Ovary (tissue), 10 donors: ENCODE measurements at regions of chr2 and their contacts with region 1.

Region 1: GRCh38 chr2:219294356-219295351 is 14.5 kb downstream of the PTPRN start:
- DNase-seq: peak; percentile 84 to 93 (median 91)
- H3K4me3 ChIP-seq: peak overlapping the region; percentile 58
- H3K27ac ChIP-seq: peak overlapping the region; percentile 83 to 97
- H3K4me1 ChIP-seq: peaks cover 9% of the 10 kb centered on the region
- H3K27me3 ChIP-seq: no peaks in the 10 kb centered on the region
- CTCF ChIP-seq: peak; percentile 97 to 100 (median 99)
- EP300 ChIP-seq: no peak
- POLR2A ChIP-seq: peak; percentile 61

Region 2: DNA sequence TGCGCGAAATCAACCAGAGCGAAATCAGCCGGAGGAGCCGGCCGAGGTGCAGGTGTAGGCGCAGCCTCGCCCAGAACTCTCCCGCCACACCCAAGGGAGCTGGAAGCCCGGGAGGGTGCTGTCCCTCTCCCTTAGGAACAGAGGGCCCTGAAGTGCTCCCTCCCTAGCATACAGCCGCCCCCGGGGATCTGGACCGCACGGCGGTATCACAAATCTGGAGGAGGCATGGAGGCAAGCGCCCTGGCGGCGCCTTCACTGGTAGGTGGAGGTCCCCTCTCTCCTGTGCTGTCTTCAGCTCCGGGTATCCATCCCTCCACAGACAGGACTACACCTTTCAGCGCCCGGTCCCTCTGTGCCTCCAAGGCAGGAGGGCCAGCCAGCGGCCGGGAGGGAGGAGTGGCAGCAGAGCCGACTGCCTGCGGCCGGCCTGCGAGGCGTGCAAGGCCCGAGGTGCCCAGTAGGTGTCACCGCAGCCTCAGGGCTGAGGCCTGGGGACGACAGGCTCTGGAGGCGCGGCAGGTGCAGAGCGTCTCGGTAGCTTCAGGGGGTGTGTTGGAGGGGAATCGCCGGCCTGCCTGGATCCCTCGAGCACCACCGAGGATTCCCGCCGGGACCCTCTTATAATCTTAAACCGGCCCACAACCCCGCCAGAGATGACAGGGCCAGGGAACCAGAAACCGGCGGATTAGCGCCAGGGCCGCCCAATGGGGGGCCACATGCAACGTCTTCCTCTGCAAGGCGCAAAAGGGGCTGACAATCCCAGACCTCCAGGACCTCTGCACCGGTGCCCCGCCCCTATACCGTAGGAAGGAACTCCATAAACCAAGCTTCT is 236.7 kb before region 1 on chr2:
- intact Hi-C with region 1: loop called in 1 of 4 experiments (anchors 5 kb)
- DNase-seq: peak; percentile 57 to 82 (median 69)
- H3K4me3 ChIP-seq: no peak overlapping the region
- H3K27ac ChIP-seq: no peak overlapping the region
- H3K4me1 ChIP-seq: peaks cover 7% of the 10 kb centered on the region
- H3K27me3 ChIP-seq: peaks cover 3% of the 10 kb centered on the region
- CTCF ChIP-seq: peak; percentile 80 to 84 (median 84)
- EP300 ChIP-seq: no peak
- POLR2A ChIP-seq: no peak

Region 3: DNA sequence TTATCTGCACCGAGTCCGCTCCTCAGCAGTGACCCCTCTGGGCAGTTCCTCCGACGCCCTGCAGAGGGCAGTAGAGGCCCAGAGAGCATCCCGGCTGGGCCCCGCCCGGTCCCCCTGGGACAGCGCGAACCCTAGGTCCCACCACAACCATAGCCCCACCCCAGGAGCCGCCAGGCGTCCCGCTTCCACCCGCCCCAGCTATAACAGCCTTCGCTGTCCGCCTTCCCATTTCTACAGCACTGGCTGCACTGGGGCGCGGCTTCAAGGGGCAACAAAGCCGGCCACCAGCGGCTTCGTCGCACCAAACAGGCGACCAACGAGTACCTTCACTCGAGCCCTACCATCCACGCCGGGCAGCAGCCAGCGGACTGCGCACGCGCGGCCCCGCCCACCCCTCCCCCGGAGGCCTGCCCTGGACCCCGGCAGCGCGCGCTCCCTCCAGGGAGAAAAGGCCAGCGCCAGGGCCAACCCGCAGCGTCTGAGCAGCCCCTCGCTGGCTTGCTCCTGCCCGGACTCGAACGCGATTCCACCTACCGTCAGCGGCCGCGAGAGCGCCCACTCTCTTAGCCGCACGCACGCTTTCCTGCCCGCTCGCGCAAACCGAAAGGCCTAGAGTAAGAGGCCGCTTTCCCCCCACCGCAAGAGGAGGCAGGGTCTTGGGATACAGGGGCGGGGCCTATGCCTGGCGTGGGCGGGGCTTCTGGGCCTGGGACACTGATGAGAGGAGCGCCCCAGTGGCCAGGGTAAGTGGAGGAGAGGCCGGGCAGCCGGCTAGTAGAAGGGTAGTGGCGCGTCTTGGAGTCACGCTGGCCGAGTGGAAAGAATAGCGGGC is 134.3 kb before region 1 on chr2 and contains the start of gene NHEJ1:
- intact Hi-C with region 1: loop called (anchors 2 to 5 kb)
- DNase-seq: peak; percentile 97 to 99 (median 98)
- H3K4me3 ChIP-seq: peak within 1 kb of the TSS; percentile 66
- H3K27ac ChIP-seq: peak within 1 kb of the TSS; percentile 87 to 93
- H3K4me1 ChIP-seq: peaks cover 5% of the 10 kb centered on the region
- H3K27me3 ChIP-seq: no peaks in the 10 kb centered on the region
- CTCF ChIP-seq: peak; percentile 94 to 99 (median 95)
- EP300 ChIP-seq: no peak
- POLR2A ChIP-seq: peak; percentile 62
- total RNA-seq, gene NHEJ1: 14.7 to 19.1 (median 17.1) TPM

Region 4: DNA sequence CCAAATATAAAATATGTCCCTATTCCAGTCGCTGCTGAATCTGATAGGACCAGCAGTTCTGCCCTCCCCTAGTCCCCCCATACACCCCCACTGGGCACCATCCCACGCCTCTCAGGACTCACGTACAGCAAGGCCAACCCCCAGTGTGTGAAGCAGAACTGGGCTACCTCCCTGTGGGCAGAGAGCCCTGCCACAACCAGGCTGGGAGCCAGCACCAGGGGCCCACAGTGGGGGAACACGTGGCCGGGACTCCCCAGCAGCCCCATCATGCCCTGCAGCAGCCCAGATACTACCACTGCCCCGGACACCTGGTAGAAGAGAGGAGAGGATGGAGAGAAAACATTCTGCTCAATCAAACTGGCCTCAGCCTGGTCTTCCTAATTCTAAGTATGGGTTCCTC is 126.1 kb before region 1 on chr2:
- intact Hi-C with region 1: loop called in 3 of 4 experiments (anchors 5 kb)
- DNase-seq: peak in 4 of 5 donors; percentile 33 to 56 (median 49)
- H3K4me3 ChIP-seq: no peak overlapping the region
- H3K27ac ChIP-seq: peak overlapping the region in 1 of 2 donors; percentile 54
- H3K4me1 ChIP-seq: peaks cover 6% of the 10 kb centered on the region
- H3K27me3 ChIP-seq: no peaks in the 10 kb centered on the region
- CTCF ChIP-seq: no peak
- EP300 ChIP-seq: no peak
- POLR2A ChIP-seq: no peak

Region 5: GRCh38 chr2:219177552-219178376 is 116.9 kb before region 1 on chr2 and contains the start of gene RETREG2:
- intact Hi-C with region 1: loop called in 2 of 4 experiments (anchors 5 kb)
- DNase-seq: peak; percentile 88 to 91 (median 89)
- H3K4me3 ChIP-seq: peak within 1 kb of the TSS; percentile 97
- H3K27ac ChIP-seq: peak within 1 kb of the TSS; percentile 87 to 94
- H3K4me1 ChIP-seq: peaks cover 8% of the 10 kb centered on the region
- H3K27me3 ChIP-seq: no peaks in the 10 kb centered on the region
- CTCF ChIP-seq: peak in 2 of 3 donors; percentile 46 to 70
- EP300 ChIP-seq: no peak
- POLR2A ChIP-seq: peak; percentile 99
- total RNA-seq, gene RETREG2: 40.9 to 106 (median 95.6) TPM

Region 6: DNA sequence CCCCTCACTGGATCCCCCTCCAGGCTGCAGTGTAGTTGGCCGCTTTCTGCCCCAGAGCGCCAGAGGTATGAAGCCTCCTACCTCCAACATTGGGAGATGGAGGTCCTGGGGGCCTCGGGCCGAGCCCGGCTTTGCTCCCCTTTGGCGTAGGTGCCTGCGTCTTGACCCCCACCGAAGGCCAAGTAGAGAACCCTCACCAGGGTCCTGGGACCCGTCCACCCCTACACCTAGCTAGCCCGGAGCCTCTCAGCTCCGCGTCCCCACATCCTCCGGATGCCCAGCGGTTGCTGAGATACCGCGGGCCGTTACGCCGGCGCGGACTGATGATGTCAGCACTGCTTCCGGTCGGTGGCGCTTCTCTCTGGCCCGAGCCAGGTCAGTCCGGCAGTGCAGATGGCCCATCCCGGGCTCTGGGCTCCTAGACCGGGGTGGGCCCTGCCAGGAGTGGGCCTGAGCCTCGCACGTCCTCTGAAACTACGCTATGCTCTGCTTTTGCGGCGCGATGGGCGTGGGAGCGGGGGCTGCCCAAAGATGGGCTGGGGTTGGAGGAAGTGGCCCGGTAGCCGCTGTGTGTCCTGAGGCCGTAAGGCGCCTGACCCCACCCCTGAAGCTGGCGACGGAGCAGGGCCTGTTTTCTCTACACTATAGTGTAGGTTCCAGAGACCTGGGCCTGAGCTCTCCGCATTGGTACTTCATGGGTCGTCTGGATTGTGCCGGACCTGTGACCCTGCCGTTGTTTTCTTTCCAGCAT is 49.3 kb before region 1 on chr2 and contains the starts of genes GLB1L and STK16:
- intact Hi-C with region 1: loop called in 1 of 4 experiments (anchors 10 kb)
- DNase-seq: peak; percentile 92 to 98 (median 96)
- H3K4me3 ChIP-seq: peak within 1 kb of the TSS; percentile 82
- H3K27ac ChIP-seq: peak within 1 kb of the TSS; percentile 72 to 85
- H3K4me1 ChIP-seq: peaks cover 18% of the 10 kb centered on the region
- H3K27me3 ChIP-seq: no peaks in the 10 kb centered on the region
- CTCF ChIP-seq: no peak
- EP300 ChIP-seq: no peak
- POLR2A ChIP-seq: peak; percentile 92
- total RNA-seq, gene GLB1L: 5.7 to 20.3 (median 13.9) TPM
- total RNA-seq, gene STK16: 12.4 to 24.8 (median 17.9) TPM

Region 7: GRCh38 chr2:219278655-219279516 is 15.8 kb before region 1 on chr2 and contains the start of gene DNAJB2:
- intact Hi-C with region 1: loop called in 2 of 4 experiments (anchors 2 kb)
- DNase-seq: peak; percentile 99 to 100 (median 99)
- H3K4me3 ChIP-seq: peak within 1 kb of the TSS; percentile 53
- H3K27ac ChIP-seq: peak within 1 kb of the TSS; percentile 98
- H3K4me1 ChIP-seq: peaks cover 8% of the 10 kb centered on the region
- H3K27me3 ChIP-seq: no peaks in the 10 kb centered on the region
- CTCF ChIP-seq: no peak
- EP300 ChIP-seq: peak; percentile 82
- POLR2A ChIP-seq: peak; percentile 87
- total RNA-seq, gene DNAJB2: 34.0 to 101 (median 85.7) TPM